Activated CD4-positive, alpha-beta memory T cell treated with anti-CD3 and anti-CD28 coated beads, Interleukin-2, amount 10 ng/mL, durations not matched to agents 7 days and 5 days (primary cell): ENCODE measurements at regions of chr15 and their contacts with region 1.

Region 1: GRCh38 chr15:35444557-35445204 is 101.3 kb downstream of the DPH6 start:
- DNase-seq: no peak
- H3K4me3 Mint-ChIP-seq: no peak overlapping the region
- H3K27ac Mint-ChIP-seq: no peak overlapping the region
- H3K4me1 Mint-ChIP-seq: no peaks in the 10 kb centered on the region
- H3K27me3 Mint-ChIP-seq: no peaks in the 10 kb centered on the region

Region 2: DNA sequence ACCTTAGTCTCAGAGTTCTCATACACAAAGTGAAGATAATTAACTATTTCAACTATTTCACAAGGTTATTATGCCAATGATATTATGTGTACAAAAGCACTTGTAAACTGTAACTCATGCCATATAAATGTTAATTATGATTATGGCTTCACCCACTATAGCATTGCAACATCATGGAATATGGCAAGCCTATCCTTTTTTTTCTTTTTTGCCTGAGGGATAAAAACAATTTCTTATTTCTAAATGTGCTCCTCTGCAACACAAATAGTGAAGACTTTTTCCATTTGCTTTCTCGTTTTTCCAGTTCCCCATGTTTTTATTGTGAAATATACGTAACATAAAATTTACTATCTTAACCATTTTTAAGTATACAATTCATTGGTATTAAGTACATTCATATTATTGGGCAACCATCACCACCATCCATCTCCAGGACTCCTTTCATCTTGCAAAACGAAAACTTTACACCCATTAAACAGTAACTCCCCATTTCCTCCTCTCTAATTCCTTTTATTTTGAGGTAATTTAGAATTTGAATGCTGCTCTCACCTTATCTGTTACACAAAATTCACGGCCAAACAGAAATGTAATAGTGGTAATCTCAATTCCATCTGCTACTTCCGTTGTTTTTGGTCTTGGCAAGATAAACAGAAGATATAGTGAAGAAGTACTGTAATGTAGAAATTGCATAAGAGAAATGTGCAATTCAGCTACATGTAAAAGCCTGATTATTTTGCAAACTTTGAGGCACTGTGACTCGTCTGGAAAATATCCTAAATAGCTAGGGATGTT is 405.8 kb before region 1 on chr15:
- CTCF ChIA-PET with region 1: no interaction called
- POLR2A ChIA-PET with region 1: no interaction called
- DNase-seq: no peak
- H3K4me3 Mint-ChIP-seq: no peak overlapping the region
- H3K27ac Mint-ChIP-seq: no peak overlapping the region
- H3K4me1 Mint-ChIP-seq: no peaks in the 10 kb centered on the region
- H3K27me3 Mint-ChIP-seq: no peaks in the 10 kb centered on the region

Region 3: GRCh38 chr15:35078221-35078915 is 366.3 kb before region 1 on chr15:
- CTCF ChIA-PET with region 1: interaction called, 55 read pairs
- POLR2A ChIA-PET with region 1: interaction called, 4 read pairs
- DNase-seq: peak; percentile 39
- H3K4me3 Mint-ChIP-seq: no peak overlapping the region
- H3K27ac Mint-ChIP-seq: no peak overlapping the region
- H3K4me1 Mint-ChIP-seq: no peaks in the 10 kb centered on the region
- H3K27me3 Mint-ChIP-seq: peaks cover 13% of the 10 kb centered on the region

Region 4: DNA sequence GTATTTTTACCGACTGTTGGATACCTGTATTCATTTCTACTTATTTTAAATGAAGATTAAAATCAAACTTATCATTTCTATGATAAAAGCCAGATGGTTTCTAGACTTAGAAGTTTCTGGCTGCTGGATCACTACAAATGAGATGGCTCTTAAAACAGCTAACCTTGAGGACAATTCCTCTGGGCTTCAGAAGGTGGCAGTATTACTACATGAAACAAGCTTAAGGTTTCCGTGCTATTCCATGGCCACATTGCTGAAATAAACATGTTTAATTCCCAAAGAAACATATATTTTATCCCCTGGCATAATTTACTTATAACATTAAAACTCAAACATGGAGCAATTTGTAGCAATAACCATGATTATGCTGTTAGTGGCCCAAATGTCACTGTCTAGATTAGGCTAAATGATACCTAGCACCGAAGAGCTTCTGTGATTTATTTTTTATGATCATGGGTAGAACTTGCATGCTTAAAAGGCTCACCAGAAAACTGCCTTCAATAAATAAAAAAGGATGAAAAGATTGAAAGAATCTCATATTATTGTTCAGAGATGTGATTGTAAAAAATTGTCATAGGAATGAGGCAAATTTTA is 155.6 kb before region 1 on chr15:
- CTCF ChIA-PET with region 1: interaction called, 56 read pairs
- POLR2A ChIA-PET with region 1: no interaction called
- DNase-seq: no peak
- H3K4me3 Mint-ChIP-seq: no peak overlapping the region
- H3K27ac Mint-ChIP-seq: no peak overlapping the region
- H3K4me1 Mint-ChIP-seq: no peaks in the 10 kb centered on the region
- H3K27me3 Mint-ChIP-seq: peaks cover 1% of the 10 kb centered on the region

Region 5: DNA sequence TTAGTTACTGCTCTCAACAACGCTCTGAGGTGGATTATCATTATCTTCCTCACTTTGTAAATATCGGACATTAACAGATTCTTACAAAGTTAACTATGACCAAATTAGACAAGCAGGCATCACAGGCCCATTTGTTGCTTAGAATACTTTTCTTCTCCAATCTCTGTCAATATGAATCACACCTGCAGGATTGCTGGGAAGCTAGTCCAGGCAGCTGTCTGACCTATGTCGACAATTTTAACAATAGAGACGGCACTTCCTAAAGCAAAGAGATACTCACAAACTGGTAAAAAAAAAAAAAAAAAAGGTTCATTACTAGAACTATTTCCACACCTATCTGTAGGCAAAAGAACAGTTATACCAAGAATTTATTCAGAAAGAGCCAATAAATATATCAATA is 15.9 kb after region 1 on chr15:
- CTCF ChIA-PET with region 1: interaction called, 12 read pairs
- POLR2A ChIA-PET with region 1: no interaction called
- DNase-seq: no peak
- H3K4me3 Mint-ChIP-seq: no peak overlapping the region
- H3K27ac Mint-ChIP-seq: no peak overlapping the region
- H3K4me1 Mint-ChIP-seq: no peaks in the 10 kb centered on the region
- H3K27me3 Mint-ChIP-seq: no peaks in the 10 kb centered on the region